Heart right ventricle (tissue), 16 donors: ENCODE measurements at regions of chr17 and their contacts with region 1.

Region 1: GRCh38 chr17:39621523-39622379 is 5.0 kb upstream of the PPP1R1B start:
- DNase-seq: peak; percentile 81 to 83
- ATAC-seq: peak; percentile 63 to 88 (median 77)
- H3K4me3 ChIP-seq: no peak overlapping the region
- H3K27ac ChIP-seq: peak overlapping the region in 1 of 10 donors; percentile 47
- H3K4me1 ChIP-seq: peaks cover 2 to 32% (median 17%) of the 10 kb centered on the region in 9 donors
- H3K27me3 ChIP-seq: peaks cover 10 to 57% (median 24%) of the 10 kb centered on the region in 7 donors
- CTCF ChIP-seq: peak; percentile 96 to 100 (median 99)

Region 2: GRCh38 chr17:39527220-39527813 is 94.4 kb before region 1 on chr17:
- intact Hi-C with region 1: loop called in 2 of 10 experiments (anchors 5 kb)
- DNase-seq: no peak
- ATAC-seq: peak in 2 of 8 donors; percentile 51 to 61
- H3K4me3 ChIP-seq: no peak overlapping the region
- H3K27ac ChIP-seq: no peak overlapping the region
- H3K4me1 ChIP-seq: peaks cover 0 to 27% (median 5%) of the 10 kb centered on the region in 9 donors
- H3K27me3 ChIP-seq: no peaks in the 10 kb centered on the region
- CTCF ChIP-seq: peak in 7 of 9 donors; percentile 39 to 61 (median 50)

Region 3: DNA sequence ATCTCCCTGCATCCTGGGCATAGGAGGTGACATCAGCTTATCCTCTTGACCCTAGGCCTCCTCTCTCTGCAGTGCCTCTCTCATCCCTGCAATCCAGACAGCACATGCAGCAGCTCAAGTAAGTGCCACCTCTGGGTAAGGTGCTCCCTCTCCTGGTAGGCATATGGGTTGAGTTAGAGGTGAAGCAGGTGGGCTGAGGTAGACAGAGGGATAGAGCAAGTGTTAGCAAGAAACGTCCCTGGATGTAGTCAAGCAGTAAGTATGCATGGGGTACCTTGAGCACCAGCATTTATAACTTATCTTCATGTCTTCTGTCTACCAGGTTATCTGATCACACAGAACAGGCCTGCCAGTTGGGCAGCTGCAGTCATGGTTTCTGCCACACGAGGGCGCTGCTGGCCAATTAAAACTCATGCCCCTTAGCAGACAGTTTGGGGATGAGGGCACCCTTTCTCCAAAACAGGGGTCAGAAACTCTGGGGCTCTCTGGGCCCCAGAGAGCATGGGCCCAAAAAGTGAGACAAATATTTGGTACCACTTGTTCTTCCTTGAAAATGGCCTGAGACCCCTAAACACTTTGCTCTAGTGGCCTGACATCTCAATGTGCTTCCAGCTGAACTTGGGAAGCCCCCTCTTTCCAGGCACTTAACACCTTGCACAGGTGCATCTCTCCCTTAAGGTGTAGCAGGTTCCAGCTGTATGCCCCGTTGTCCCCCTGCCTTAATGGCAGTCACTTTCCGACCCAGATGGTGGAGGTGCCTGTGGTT is 73.9 kb before region 1 on chr17:
- intact Hi-C with region 1: loop called (anchors 1 to 5 kb)
- DNase-seq: peak; percentile 54 to 69
- ATAC-seq: peak; percentile 49 to 83 (median 77)
- H3K4me3 ChIP-seq: no peak overlapping the region
- H3K27ac ChIP-seq: peak overlapping the region in 1 of 10 donors; percentile 29
- H3K4me1 ChIP-seq: peaks cover 0 to 28% (median 15%) of the 10 kb centered on the region in 9 donors
- H3K27me3 ChIP-seq: no peaks in the 10 kb centered on the region
- CTCF ChIP-seq: peak; percentile 87 to 96 (median 93)

Region 4: GRCh38 chr17:39668199-39668966 is 46.6 kb after region 1 on chr17 and contains the start of gene PNMT:
- intact Hi-C with region 1: loop called in 5 of 10 experiments (anchors 5 to 10 kb)
- DNase-seq: peak; percentile 68 to 83
- ATAC-seq: peak in 3 of 8 donors; percentile 2 to 31 (median 6)
- H3K4me3 ChIP-seq: peak within 1 kb of the TSS; percentile 24 to 77 (median 52)
- H3K27ac ChIP-seq: peak within 1 kb of the TSS; percentile 88 to 98 (median 94)
- H3K4me1 ChIP-seq: peaks cover 25 to 78% (median 51%) of the 10 kb centered on the region in 9 donors
- H3K27me3 ChIP-seq: peaks cover 0 to 59% (median 8%) of the 10 kb centered on the region in 7 donors
- CTCF ChIP-seq: peak; percentile 52 to 81 (median 65)
- total RNA-seq, gene PNMT: 2.7 to 12.8 (median 3.9) TPM

Region 5: DNA sequence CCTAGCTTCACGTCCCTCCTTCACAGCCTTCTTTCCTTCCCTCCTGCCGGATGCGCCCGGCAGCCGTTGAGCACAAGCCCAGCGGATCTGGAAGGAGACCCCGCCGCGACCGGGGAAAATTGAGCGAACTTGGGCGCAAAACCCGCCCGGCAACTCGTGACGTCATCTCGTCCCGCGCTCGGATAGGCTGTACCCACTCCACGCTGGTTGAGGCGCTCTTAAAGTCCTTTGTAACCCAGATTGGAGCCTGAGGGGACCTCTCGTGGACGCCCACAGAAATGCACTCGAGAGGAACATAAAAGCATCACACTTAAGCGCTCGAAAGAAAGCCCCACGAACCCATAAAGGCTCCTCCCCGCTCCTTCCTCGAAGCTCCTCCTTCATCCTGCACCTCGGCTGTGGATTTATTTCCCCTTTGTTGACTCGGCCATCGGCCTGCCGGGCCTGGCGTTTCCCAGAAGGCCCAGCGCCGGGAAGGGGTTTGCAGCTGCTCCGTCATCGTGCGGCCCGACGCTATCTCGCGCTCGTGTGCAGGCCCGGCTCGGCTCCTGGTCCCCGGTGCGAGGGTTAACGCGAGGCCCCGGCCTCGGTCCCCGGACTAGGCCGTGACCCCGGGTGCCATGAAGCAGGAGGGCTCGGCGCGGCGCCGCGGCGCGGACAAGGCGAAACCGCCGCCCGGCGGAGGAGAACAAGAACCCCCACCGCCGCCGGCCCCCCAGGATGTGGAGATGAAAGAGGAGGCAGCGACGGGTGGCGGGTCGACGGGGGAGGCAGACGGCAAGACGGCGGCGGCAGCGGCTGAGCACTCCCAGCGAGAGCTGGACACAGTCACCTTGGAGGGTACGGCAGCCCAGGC is 358.8 kb after region 1 on chr17 and contains the start of gene PSMD3:
- intact Hi-C with region 1: loop called in 1 of 10 experiments (anchors 2 kb)
- DNase-seq: peak; percentile 96 to 99
- ATAC-seq: peak; percentile 95 to 98 (median 98)
- H3K4me3 ChIP-seq: peak within 1 kb of the TSS; percentile 85 to 100 (median 96)
- H3K27ac ChIP-seq: peak within 1 kb of the TSS; percentile 70 to 97 (median 95)
- H3K4me1 ChIP-seq: peaks cover 5 to 38% (median 23%) of the 10 kb centered on the region in 9 donors
- H3K27me3 ChIP-seq: peaks cover 0 to 9% (median 0%) of the 10 kb centered on the region in 7 donors
- CTCF ChIP-seq: peak; percentile 67 to 92 (median 82)
- total RNA-seq, gene PSMD3: 76.5 to 113 (median 81.8) TPM